ENCODE measurements at regions of chr4 and their contacts with region 1.

Region 1: DNA sequence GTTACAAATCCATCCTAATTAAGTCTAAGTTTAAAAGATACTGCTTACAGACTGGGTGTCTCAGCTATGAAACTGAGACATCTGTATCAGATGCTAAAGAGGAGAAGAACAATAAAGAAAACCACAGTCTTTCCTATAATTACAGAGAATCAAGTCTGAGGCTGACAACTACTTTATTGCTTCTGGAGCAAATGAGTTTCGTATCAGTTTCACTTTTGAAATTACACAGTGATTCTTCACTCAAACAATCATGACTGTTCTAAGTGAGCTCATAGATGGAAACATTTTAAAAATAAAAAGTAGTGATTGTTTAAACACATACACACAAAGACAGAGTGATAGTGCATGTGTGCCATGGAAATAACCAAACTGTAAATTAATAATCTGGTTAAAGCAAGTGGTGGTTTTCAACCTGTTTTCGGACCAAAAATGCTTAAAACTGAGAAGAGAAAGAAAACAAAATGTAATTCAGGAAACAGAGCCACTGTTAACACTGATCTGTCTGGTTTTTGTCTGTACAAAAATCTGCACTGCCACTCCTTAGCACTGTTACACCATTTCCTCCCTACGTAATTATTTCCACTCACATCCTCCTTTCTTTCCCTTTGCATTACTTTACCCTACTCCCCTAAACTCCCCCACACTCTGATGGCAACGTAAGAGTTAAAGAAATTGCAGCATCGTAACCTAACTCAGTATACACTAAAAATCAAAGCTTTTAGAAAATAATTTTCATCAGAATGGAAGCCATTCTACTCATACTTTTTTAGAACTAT is 12.5 kb downstream of the RFC1 start:
- DNase-seq: no peak
- H3K4me3 Mint-ChIP-seq: peak overlapping the region; percentile 60
- H3K27ac Mint-ChIP-seq: peak overlapping the region; percentile 94
- H3K4me1 Mint-ChIP-seq: peaks cover 75% of the 10 kb centered on the region
- H3K27me3 Mint-ChIP-seq: no peaks in the 10 kb centered on the region

Region 2: DNA sequence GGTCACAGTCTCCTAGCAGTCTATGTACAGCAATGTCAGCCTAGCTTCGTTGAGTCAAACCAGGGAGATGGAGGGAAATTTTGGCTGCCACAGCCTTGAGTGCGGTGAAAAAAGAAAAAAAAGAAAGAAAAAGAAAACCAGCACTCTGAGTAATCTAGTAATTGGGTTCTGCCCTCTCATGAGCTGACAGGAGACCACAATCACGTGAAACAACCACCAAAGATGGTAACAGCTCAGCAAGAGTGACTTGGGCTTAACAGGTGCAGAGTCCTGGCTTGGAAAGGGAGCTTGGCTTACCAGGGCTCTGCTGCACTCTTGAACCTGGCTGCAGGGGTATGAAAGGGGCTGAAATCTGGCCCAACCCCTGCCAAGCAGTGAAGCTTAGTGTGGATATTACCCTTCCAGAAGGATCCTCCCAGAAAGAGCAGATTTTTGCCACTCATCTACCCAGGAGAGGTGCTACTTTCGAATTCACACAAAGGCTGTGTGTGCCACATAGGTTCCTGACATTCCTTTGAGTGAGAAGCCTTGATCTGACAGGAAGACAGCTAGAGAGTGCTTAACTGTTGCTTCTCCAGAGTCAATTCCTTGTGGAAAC is 1043.1 kb before region 1 on chr4:
- CTCF ChIA-PET with region 1: no interaction called
- POLR2A ChIA-PET with region 1: no interaction called
- intact Hi-C with region 1: loop called (anchors 2 kb)
- DNase-seq: peak; percentile 86
- H3K4me3 Mint-ChIP-seq: peak overlapping the region; percentile 12
- H3K27ac Mint-ChIP-seq: peak overlapping the region; percentile 72
- H3K4me1 Mint-ChIP-seq: peaks cover 68% of the 10 kb centered on the region
- H3K27me3 Mint-ChIP-seq: peaks cover 15% of the 10 kb centered on the region

Region 3: GRCh38 chr4:38867478-38868058 is 486.1 kb before region 1 on chr4 and contains the start of gene FAM114A1:
- CTCF ChIA-PET with region 1: no interaction called
- POLR2A ChIA-PET with region 1: no interaction called
- intact Hi-C with region 1: no loop called
- DNase-seq: peak; percentile 33
- H3K4me3 Mint-ChIP-seq: peak within 1 kb of the TSS; percentile 59
- H3K27ac Mint-ChIP-seq: no peak within 1 kb of the TSS
- H3K4me1 Mint-ChIP-seq: peaks cover 7% of the 10 kb centered on the region
- H3K27me3 Mint-ChIP-seq: peaks cover 27% of the 10 kb centered on the region
- total RNA-seq, gene FAM114A1: 0.50 to 0.65 TPM

Region 4: DNA sequence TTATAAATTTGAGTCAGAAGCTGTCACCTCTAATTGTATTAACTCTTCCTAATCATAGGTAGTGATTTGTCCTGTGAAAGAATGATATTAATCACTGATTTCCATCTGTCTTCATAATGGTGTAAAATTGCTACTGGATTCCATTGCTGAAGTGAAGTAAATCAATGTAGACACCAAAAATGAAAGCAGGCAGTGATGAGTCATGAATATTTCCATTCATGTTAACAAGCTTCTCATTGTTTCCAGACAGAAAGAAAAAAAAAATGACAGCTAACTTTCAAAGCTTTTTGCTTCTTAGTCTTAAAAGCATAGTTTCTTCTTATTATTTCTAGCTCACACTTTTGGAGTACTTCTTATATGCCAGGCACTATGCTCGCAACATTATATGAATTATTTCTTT is 464.5 kb before region 1 on chr4:
- CTCF ChIA-PET with region 1: no interaction called
- POLR2A ChIA-PET with region 1: no interaction called
- intact Hi-C with region 1: loop called (anchors 10 kb)
- DNase-seq: no peak
- H3K4me3 Mint-ChIP-seq: peak overlapping the region; percentile 48
- H3K27ac Mint-ChIP-seq: peak overlapping the region; percentile 81
- H3K4me1 Mint-ChIP-seq: peaks cover 22% of the 10 kb centered on the region
- H3K27me3 Mint-ChIP-seq: no peaks in the 10 kb centered on the region

Region 5: GRCh38 chr4:39032218-39033085 is 321.2 kb before region 1 on chr4 and contains the start of gene TMEM156:
- CTCF ChIA-PET with region 1: no interaction called
- POLR2A ChIA-PET with region 1: no interaction called
- intact Hi-C with region 1: loop called (anchors 5 kb)
- DNase-seq: peak; percentile 71
- H3K4me3 Mint-ChIP-seq: peak within 1 kb of the TSS; percentile 78
- H3K27ac Mint-ChIP-seq: peak within 1 kb of the TSS; percentile 87
- H3K4me1 Mint-ChIP-seq: peaks cover 47% of the 10 kb centered on the region
- H3K27me3 Mint-ChIP-seq: no peaks in the 10 kb centered on the region
- total RNA-seq, gene TMEM156: 28.0 to 28.4 TPM

Region 6: GRCh38 chr4:39285111-39285795 is 68.4 kb before region 1 on chr4:
- CTCF ChIA-PET with region 1: no interaction called
- POLR2A ChIA-PET with region 1: no interaction called
- intact Hi-C with region 1: loop called (anchors 2 kb)
- DNase-seq: no peak
- H3K4me3 Mint-ChIP-seq: no peak overlapping the region
- H3K27ac Mint-ChIP-seq: peak overlapping the region; percentile 49
- H3K4me1 Mint-ChIP-seq: peaks cover 12% of the 10 kb centered on the region
- H3K27me3 Mint-ChIP-seq: no peaks in the 10 kb centered on the region

Region 7: GRCh38 chr4:39458505-39459300 is 105.0 kb after region 1 on chr4 and contains the starts of genes LIAS and RPL9:
- CTCF ChIA-PET with region 1: interaction called, 3 read pairs
- POLR2A ChIA-PET with region 1: interaction called, 8 read pairs
- intact Hi-C with region 1: loop called (anchors 2 kb)
- DNase-seq: peak; percentile 96
- H3K4me3 Mint-ChIP-seq: peak within 1 kb of the TSS; percentile 93
- H3K27ac Mint-ChIP-seq: peak within 1 kb of the TSS; percentile 97
- H3K4me1 Mint-ChIP-seq: peaks cover 48% of the 10 kb centered on the region
- H3K27me3 Mint-ChIP-seq: peaks cover 1% of the 10 kb centered on the region
- total RNA-seq, gene LIAS: 23.2 to 23.7 TPM
- total RNA-seq, gene RPL9: 2,178 to 2,222 TPM

Region 8: GRCh38 chr4:39697740-39698423 is 344.2 kb after region 1 on chr4 and contains the start of gene UBE2K:
- CTCF ChIA-PET with region 1: no interaction called
- POLR2A ChIA-PET with region 1: no interaction called
- intact Hi-C with region 1: loop called (anchors 10 kb)
- DNase-seq: peak; percentile 92
- H3K4me3 Mint-ChIP-seq: peak within 1 kb of the TSS; percentile 96
- H3K27ac Mint-ChIP-seq: peak within 1 kb of the TSS; percentile 96
- H3K4me1 Mint-ChIP-seq: peaks cover 36% of the 10 kb centered on the region
- H3K27me3 Mint-ChIP-seq: no peaks in the 10 kb centered on the region
- total RNA-seq, gene UBE2K: 81.4 to 83.5 TPM